CD8-positive, alpha-beta T cell (primary cell): ENCODE measurements at regions of chr16 and their contacts with region 1.

Region 1: GRCh38 chr16:2009789-2010510 is at the start of gene ZNF598:
- DNase-seq: peak; percentile 44 to 92 (median 80)
- ATAC-seq: peak; percentile 93
- H3K4me3 ChIP-seq: peak within 1 kb of the TSS; percentile 71 to 88
- H3K4me3 Mint-ChIP-seq: peak within 1 kb of the TSS; percentile 91
- H3K27ac ChIP-seq: peak within 1 kb of the TSS; percentile 96 to 97
- H3K27ac Mint-ChIP-seq: peak within 1 kb of the TSS; percentile 97
- H3K4me1 ChIP-seq: peaks cover 50% of the 10 kb centered on the region
- H3K4me1 Mint-ChIP-seq: peaks cover 42% of the 10 kb centered on the region
- H3K27me3 ChIP-seq: no peaks in the 10 kb centered on the region
- H3K27me3 Mint-ChIP-seq: no peaks in the 10 kb centered on the region
- CTCF ChIP-seq: no peak
- total RNA-seq, gene ZNF598: 49.0 to 50.8 TPM

Region 2: DNA sequence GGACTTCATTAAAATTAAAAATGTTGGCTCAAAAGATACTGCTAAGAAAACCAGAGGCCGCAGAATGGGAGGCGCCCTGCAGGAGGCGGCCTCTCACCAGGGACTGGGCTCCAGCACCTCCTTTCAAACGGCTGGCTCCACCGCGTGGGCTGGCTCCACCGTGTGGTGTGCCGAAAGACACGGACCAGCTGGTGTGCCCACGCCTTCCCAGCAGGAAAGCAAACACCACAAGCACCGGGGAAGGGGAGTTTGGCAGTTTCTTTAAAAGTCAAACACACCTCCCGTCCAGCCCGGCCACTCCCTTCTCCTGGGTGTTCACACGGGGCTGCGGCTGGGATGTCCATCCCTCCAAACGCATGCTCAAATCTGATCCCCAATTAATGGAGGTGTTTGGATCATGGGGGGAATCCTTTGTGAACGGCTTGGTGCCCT is 197.2 kb before region 1 on chr16:
- CTCF ChIA-PET with region 1: no interaction called
- POLR2A ChIA-PET with region 1: no interaction called
- intact Hi-C with region 1: no loop called
- DNase-seq: peak in 8 of 9 experiments; percentile 19 to 66 (median 57)
- ATAC-seq: peak; percentile 98
- H3K4me3 ChIP-seq: no peak overlapping the region
- H3K4me3 Mint-ChIP-seq: no peak overlapping the region
- H3K27ac ChIP-seq: no peak overlapping the region
- H3K27ac Mint-ChIP-seq: no peak overlapping the region
- H3K4me1 ChIP-seq: no peaks in the 10 kb centered on the region
- H3K4me1 Mint-ChIP-seq: peaks cover 12% of the 10 kb centered on the region
- H3K27me3 ChIP-seq: no peaks in the 10 kb centered on the region
- H3K27me3 Mint-ChIP-seq: no peaks in the 10 kb centered on the region
- CTCF ChIP-seq: peak; percentile 47

Region 3: GRCh38 chr16:1959269-1960049 is 50.5 kb before region 1 on chr16 and contains the start of gene NDUFB10:
- CTCF ChIA-PET with region 1: no interaction called
- POLR2A ChIA-PET with region 1: interaction called, 11 read pairs
- intact Hi-C with region 1: loop called in 1 of 2 experiments (anchors 1 kb)
- DNase-seq: peak; percentile 80 to 96 (median 92)
- ATAC-seq: peak; percentile 86
- H3K4me3 ChIP-seq: peak within 1 kb of the TSS; percentile 91 to 95
- H3K4me3 Mint-ChIP-seq: peak within 1 kb of the TSS; percentile 90
- H3K27ac ChIP-seq: peak within 1 kb of the TSS; percentile 75 to 80
- H3K27ac Mint-ChIP-seq: peak within 1 kb of the TSS; percentile 89
- H3K4me1 ChIP-seq: peaks cover 39% of the 10 kb centered on the region
- H3K4me1 Mint-ChIP-seq: peaks cover 39% of the 10 kb centered on the region
- H3K27me3 ChIP-seq: no peaks in the 10 kb centered on the region
- H3K27me3 Mint-ChIP-seq: no peaks in the 10 kb centered on the region
- CTCF ChIP-seq: peak; percentile 59
- total RNA-seq, gene NDUFB10: 36.2 to 38.4 TPM

Region 4: DNA sequence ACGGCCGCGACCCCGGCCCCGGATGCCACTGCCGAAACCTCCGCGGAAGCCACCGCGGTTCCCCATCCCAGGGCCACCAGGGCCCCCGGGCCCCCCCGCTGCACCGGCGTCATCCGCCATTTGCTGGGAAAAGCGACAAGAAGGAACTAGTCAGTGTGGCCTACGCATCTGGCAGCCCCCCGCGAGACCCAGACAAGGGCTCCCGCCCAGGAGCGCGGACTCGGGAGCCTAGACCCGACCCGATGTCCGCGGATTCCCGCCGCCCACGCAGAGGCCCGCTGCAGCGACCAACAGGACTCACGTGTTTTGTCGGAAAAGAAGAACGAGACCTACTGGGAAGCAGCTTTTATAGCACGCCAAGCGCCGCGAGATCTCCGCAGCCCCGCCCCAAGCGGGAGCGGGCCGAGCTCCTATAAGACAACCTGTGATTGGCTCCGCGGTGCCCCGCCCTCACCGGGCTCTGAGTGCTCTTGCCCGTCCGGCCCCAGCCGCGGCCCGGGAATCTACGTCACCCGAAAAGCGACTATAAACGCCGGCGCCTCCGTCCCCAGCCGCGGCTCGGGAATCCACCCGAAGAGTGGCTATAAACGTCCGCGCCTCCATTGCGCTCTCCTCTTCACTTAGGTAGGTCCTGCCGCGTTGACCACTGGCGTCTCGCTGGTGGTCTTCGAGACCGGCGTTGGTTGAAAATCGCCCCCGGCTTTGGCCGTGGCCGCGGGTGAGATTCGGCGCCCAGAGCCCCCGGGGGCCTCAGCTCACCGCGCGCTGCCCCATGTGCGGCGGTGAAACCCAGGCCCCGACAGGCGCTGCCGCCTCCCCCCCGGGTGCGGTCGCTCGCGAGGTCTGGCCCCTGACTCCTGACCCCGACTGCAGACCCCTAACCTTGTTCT is 45.2 kb before region 1 on chr16 and contains the start of gene RPS2:
- CTCF ChIA-PET with region 1: no interaction called
- POLR2A ChIA-PET with region 1: interaction called, 11 read pairs
- intact Hi-C with region 1: loop called in 1 of 2 experiments (anchors 1 kb)
- DNase-seq: peak; percentile 92 to 99 (median 98)
- ATAC-seq: peak; percentile 89
- H3K4me3 ChIP-seq: peak within 1 kb of the TSS; percentile 82 to 99
- H3K4me3 Mint-ChIP-seq: peak within 1 kb of the TSS; percentile 94
- H3K27ac ChIP-seq: peak within 1 kb of the TSS; percentile 98 to 99
- H3K27ac Mint-ChIP-seq: peak within 1 kb of the TSS; percentile 96
- H3K4me1 ChIP-seq: peaks cover 41% of the 10 kb centered on the region
- H3K4me1 Mint-ChIP-seq: peaks cover 45% of the 10 kb centered on the region
- H3K27me3 ChIP-seq: no peaks in the 10 kb centered on the region
- H3K27me3 Mint-ChIP-seq: no peaks in the 10 kb centered on the region
- CTCF ChIP-seq: no peak
- total RNA-seq, gene RPS2: 4,060 to 4,094 TPM

Region 5: GRCh38 chr16:1991948-1992703 is 17.8 kb before region 1 on chr16:
- CTCF ChIA-PET with region 1: interaction called, 13 read pairs
- POLR2A ChIA-PET with region 1: interaction called, 4 read pairs
- intact Hi-C with region 1: loop called (anchors 1 kb)
- DNase-seq: peak; percentile 95 to 99 (median 97)
- ATAC-seq: peak; percentile 88
- H3K4me3 ChIP-seq: peak overlapping the region; percentile 53 to 60
- H3K4me3 Mint-ChIP-seq: peak overlapping the region; percentile 39
- H3K27ac ChIP-seq: peak overlapping the region; percentile 27 to 45
- H3K27ac Mint-ChIP-seq: peak overlapping the region; percentile 80
- H3K4me1 ChIP-seq: peaks cover 19% of the 10 kb centered on the region
- H3K4me1 Mint-ChIP-seq: peaks cover 26% of the 10 kb centered on the region
- H3K27me3 ChIP-seq: peaks cover 9 to 13% of the 10 kb centered on the region in 2 experiments
- H3K27me3 Mint-ChIP-seq: peaks cover 9% of the 10 kb centered on the region
- CTCF ChIP-seq: no peak

Region 6: DNA sequence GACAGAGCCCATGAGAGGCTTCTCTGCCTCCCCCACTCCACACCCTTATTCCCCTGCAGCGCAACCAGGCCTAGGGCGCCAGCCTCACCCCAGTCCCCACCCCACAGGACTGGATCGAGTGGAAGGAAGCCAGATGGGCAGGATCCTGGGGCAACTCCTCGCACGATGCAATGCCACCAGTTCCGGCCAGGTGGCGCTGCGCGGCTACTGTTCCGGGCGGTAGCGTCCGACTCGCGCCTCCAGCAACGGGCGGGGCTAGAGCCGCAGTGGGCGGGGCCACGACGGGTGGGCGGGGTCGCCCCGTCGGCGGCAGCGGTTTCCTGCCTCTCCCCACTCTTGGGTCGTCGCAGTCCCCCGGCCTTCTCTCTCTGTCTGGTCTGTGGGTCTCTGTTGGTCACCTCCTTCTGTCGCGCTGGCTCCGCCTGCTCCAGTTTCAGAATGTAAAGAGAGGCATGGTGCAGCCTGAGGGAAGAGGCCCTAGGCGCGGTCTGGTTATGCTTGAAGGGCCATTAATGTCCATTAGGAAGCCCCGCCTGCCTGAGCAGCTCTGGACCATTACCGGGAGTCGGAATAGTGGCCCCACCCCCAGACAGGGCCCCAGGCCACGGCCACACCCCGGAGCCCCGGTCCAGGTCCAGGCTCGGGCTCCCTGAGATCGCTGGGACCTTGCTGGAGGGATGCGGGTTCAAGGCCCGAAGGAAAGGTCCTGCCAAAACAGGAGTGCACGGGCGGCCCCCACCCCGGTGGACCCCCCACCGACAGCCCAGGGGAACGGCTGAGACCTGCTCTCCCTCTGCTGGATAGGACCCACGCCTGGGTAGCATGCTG is 13.4 kb after region 1 on chr16:
- CTCF ChIA-PET with region 1: interaction called, 6 read pairs
- POLR2A ChIA-PET with region 1: interaction called, 3 read pairs
- intact Hi-C with region 1: loop called in 1 of 2 experiments (anchors 1 kb)
- DNase-seq: peak; percentile 88 to 100 (median 95)
- ATAC-seq: peak; percentile 95
- H3K4me3 ChIP-seq: peak overlapping the region; percentile 37 to 43
- H3K4me3 Mint-ChIP-seq: peak overlapping the region; percentile 69
- H3K27ac ChIP-seq: peak overlapping the region; percentile 24 to 70
- H3K27ac Mint-ChIP-seq: peak overlapping the region; percentile 70
- H3K4me1 ChIP-seq: peaks cover 32% of the 10 kb centered on the region
- H3K4me1 Mint-ChIP-seq: peaks cover 21% of the 10 kb centered on the region
- H3K27me3 ChIP-seq: peaks cover 0 to 22% of the 10 kb centered on the region in 2 experiments
- H3K27me3 Mint-ChIP-seq: peaks cover 17% of the 10 kb centered on the region
- CTCF ChIP-seq: peak; percentile 89

Region 7: DNA sequence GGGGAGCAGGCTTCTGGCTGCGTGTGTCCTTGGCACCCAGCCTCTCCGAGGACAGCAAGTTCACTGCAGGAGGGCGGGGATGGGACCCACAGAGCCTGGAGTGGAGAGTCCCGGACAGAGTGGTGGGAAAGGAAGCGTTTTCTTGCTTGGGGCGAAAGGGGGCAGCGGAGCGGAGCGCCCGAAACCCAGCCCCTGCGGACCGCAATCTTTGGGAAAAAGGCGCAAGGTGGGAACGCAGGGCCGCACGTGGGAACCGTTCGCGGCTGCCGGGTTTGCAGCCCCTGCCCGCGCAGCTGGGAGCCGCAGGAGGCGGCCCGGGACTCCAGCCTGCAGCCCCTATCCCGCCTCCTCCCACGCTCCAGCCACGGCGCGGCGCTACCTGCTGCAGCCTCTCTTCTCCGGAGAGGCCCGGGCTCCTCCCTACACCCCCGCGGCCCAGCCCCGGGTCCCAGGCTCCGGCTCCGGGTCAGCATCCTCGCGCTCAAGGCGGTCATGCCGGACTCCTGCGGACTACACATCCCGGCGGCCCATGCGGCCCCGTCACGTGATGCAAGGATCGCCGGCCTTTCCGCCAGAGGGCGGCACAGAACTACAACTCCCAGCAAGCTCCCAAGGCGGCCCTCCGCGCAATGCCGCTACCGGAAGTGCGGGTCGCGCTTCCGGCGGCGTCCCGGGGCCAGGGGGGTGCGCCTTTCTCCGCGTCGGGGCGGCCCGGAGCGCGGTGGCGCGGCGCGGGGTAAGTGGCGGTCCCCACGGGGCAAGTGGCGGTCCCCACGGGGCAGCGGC is 37.6 kb after region 1 on chr16 and contains the starts of genes NTHL1 and TSC2:
- CTCF ChIA-PET with region 1: interaction called, 3 read pairs
- POLR2A ChIA-PET with region 1: no interaction called
- intact Hi-C with region 1: loop called in 1 of 2 experiments (anchors 1 kb)
- DNase-seq: peak; percentile 82 to 96 (median 92)
- ATAC-seq: peak; percentile 89
- H3K4me3 ChIP-seq: peak within 1 kb of the TSS; percentile 90 to 93
- H3K4me3 Mint-ChIP-seq: peak within 1 kb of the TSS; percentile 91
- H3K27ac ChIP-seq: peak within 1 kb of the TSS; percentile 60 to 64
- H3K27ac Mint-ChIP-seq: peak within 1 kb of the TSS; percentile 62
- H3K4me1 ChIP-seq: peaks cover 17% of the 10 kb centered on the region
- H3K4me1 Mint-ChIP-seq: peaks cover 24% of the 10 kb centered on the region
- H3K27me3 ChIP-seq: no peaks in the 10 kb centered on the region
- H3K27me3 Mint-ChIP-seq: no peaks in the 10 kb centered on the region
- CTCF ChIP-seq: peak; percentile 39
- total RNA-seq, gene NTHL1: 1.7 to 2.0 TPM
- total RNA-seq, gene TSC2: 76.2 to 84.1 TPM

Region 8: GRCh38 chr16:2682209-2683021 is 672.5 kb after region 1 on chr16 and contains the start of gene KCTD5:
- CTCF ChIA-PET with region 1: no interaction called
- POLR2A ChIA-PET with region 1: no interaction called
- intact Hi-C with region 1: loop called in 1 of 2 experiments (anchors 2 kb)
- DNase-seq: peak; percentile 91 to 98 (median 96)
- ATAC-seq: peak; percentile 96
- H3K4me3 ChIP-seq: peak within 1 kb of the TSS; percentile 98 to 99
- H3K4me3 Mint-ChIP-seq: peak within 1 kb of the TSS; percentile 94
- H3K27ac ChIP-seq: peak within 1 kb of the TSS; percentile 73 to 85
- H3K27ac Mint-ChIP-seq: peak within 1 kb of the TSS; percentile 96
- H3K4me1 ChIP-seq: peaks cover 19% of the 10 kb centered on the region
- H3K4me1 Mint-ChIP-seq: peaks cover 32% of the 10 kb centered on the region
- H3K27me3 ChIP-seq: no peaks in the 10 kb centered on the region
- H3K27me3 Mint-ChIP-seq: no peaks in the 10 kb centered on the region
- CTCF ChIP-seq: no peak
- total RNA-seq, gene KCTD5: 34.2 to 36.0 TPM